Aorta (tissue), 5 donors: ENCODE measurements at regions of chr11 and their contacts with region 1.

Region 1: GRCh38 chr11:123729602-123730001 is 11.9 kb downstream of the ZNF202 start:
- DNase-seq: no peak
- ATAC-seq: no peak
- H3K4me3 ChIP-seq: no peak overlapping the region
- H3K27ac ChIP-seq: no peak overlapping the region
- H3K4me1 ChIP-seq: no peaks in the 10 kb centered on the region
- H3K27me3 ChIP-seq: no peaks in the 10 kb centered on the region

Region 2: DNA sequence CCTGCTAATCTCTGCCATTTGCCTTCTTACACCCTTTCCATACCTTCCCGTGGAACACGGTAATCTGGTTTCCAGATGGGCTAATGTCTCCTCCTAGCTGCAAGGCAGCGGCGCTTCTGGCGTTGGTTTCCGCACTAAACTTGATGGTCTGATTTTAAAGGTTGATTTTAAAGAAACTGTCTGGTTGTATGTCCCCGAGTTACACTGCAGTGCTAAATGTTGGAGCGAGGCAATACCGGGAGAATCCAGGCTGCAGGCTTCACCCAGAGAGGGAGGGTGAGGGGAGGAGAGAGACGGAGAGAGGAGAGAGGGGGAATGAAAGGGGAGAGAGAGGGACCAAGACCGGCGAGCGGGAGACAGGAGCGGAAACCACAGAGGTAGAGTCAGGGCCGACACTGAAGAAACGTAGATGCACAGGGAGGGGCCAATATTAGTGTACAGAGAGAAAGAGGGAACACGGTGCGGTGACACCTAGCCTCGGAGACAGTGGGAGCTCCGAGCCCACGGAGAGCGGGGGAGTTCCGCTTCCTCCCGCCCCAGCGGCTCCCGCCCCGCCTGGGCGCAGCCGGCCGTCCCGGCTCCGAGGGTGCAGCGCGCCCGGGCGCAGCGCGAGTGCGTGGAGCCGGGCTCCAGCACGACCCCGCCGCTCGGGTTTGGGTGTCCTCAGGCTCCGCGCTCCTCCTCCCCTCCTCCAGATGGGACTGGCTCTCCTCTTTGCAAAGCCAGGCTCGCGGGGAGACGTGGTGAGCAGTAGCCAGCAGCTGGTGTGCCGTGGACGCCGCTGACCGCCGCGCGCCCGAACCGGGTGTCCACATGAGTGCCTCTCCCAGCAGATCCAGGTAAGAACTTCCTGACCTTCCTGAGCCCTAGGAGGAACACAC is 371.4 kb before region 1 on chr11:
- intact Hi-C with region 1: no loop called
- DNase-seq: no peak
- ATAC-seq: no peak
- H3K4me3 ChIP-seq: no peak overlapping the region
- H3K27ac ChIP-seq: no peak overlapping the region
- H3K4me1 ChIP-seq: no peaks in the 10 kb centered on the region
- H3K27me3 ChIP-seq: peaks cover 0 to 7% of the 10 kb centered on the region in 2 donors

Region 3: DNA sequence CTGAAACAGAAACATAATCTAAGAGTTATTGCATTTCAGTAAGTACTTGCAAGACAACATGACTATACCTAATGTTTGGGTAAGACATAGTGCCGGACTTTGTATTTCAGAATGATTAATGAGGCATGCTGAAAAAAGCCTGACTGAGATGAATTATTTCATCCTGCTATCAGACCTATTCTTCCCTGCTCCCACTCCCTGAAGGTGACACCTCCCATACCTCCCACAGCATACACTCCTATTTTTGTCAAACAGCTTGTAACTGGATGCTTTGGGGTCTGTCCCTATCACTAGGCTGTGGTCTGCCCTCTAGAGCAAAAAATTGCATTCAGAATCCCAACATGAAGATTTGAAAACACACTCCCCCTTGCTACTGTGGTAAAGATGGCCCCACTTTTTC is 64.3 kb before region 1 on chr11:
- intact Hi-C with region 1: loop called in 1 of 2 experiments (anchors 10 kb)
- DNase-seq: no peak
- ATAC-seq: no peak
- H3K4me3 ChIP-seq: no peak overlapping the region
- H3K27ac ChIP-seq: no peak overlapping the region
- H3K4me1 ChIP-seq: no peaks in the 10 kb centered on the region
- H3K27me3 ChIP-seq: no peaks in the 10 kb centered on the region

Region 4: DNA sequence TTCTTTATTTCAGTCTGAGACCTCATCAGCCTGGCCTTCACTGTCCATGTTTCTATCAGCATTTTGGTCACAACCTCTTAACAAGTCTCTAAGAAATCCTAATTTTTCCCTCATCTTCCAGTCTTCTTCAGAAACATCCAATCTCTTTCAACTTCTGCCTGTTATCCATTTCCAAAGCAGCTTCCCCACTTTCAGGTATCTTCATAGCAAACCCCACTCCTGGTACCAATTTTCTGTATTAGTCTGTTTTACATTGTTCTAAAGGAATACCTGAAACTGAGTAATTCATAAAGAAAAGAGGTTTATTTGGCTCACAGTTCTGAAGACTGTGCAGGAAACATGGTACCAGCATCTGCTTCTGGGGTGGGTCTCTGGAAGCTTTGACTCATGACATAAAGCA is 32.8 kb after region 1 on chr11:
- intact Hi-C with region 1: loop called in 1 of 2 experiments (anchors 2 kb)
- DNase-seq: no peak
- ATAC-seq: no peak
- H3K4me3 ChIP-seq: no peak overlapping the region
- H3K27ac ChIP-seq: no peak overlapping the region
- H3K4me1 ChIP-seq: no peaks in the 10 kb centered on the region
- H3K27me3 ChIP-seq: no peaks in the 10 kb centered on the region